Head of caudate nucleus (tissue), 42 donors: ENCODE measurements at regions of chr12 and their contacts with region 1.

Region 1: GRCh38 chr12:51025836-51026638 is at the start of gene SLC11A2:
- DNase-seq: peak; percentile 94 to 99 (median 98)

Region 2: GRCh38 chr12:50924439-50925341 is 101.3 kb before region 1 on chr12:
- intact Hi-C with region 1: loop called (anchors 10 kb)
- DNase-seq: peak; percentile 66 to 96 (median 88)

Region 3: DNA sequence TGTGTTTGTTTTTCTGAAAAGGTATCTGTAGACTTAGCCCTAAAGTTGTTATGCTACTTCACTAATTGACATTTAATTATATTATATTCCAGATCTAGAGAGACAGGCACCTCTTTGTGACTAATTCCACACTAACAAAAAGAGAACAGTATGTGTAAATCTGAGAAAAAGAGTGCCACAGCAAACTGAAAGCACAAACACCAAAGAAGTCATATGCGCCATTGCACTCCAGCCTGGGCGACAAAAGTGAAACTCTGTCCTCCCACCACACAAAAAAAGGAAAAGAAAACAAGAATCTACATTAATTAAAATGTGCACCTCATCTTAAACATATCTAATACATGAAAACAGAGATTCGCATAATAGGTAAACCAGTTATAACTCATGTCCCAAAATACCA is 61.8 kb after region 1 on chr12:
- intact Hi-C with region 1: no loop called
- DNase-seq: no peak